ENCODE measurements at regions of chr1 and their contacts with region 1.

Region 1: DNA sequence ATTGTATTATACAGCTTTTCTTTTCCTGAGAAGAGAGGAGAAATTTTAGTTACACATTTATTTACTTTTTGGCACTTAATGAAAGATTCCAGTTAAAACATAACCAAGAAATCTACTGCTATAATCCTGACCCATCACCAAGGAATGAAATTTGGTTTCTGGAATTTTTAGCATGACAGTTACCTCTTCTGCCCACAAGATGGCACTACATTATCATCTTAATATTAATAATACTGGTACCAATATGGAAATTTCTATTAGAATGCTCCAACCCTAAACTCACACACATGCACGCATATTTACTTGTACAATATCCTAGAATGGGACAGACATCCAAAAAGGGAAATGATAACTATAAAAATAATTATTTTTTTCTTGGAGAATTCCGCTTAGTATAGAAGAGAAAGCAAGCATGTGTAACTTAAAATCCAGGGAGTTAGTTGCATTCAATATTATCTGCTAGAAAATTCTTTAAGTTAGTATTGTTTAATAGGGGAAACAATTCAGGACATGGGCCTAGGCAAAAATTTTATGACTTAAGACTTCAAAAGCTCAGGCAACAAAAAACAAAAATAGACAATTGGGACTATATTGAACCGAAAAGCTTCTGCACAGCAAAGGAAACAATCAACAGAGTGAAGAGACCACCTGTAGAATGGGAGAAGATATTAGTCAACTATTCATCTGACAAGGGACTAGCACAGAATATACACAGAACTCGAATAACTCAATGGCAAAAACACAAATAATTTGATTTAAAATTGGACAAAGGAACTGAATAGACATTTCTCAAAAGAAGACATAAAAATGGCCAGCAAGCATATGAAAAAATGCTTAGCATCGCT is 37.4 kb downstream of the MAP3K21 start:
- DNase-seq: peak; percentile 33
- H3K4me3 ChIP-seq: no peak overlapping the region
- H3K27ac ChIP-seq: no peak overlapping the region
- H3K4me1 ChIP-seq: no peaks in the 10 kb centered on the region
- H3K27me3 ChIP-seq: no peaks in the 10 kb centered on the region
- CTCF ChIP-seq: peak; percentile 77

Region 2: GRCh38 chr1:233738850-233739249 is 373.9 kb after region 1 on chr1:
- CTCF ChIA-PET with region 1: interaction called, 7 read pairs
- POLR2A ChIA-PET with region 1: interaction called, 21 read pairs
- intact Hi-C with region 1: no loop called
- DNase-seq: no peak
- H3K4me3 ChIP-seq: no peak overlapping the region
- H3K27ac ChIP-seq: no peak overlapping the region
- H3K4me1 ChIP-seq: no peaks in the 10 kb centered on the region
- H3K27me3 ChIP-seq: peaks cover 12% of the 10 kb centered on the region
- CTCF ChIP-seq: no peak

Region 3: DNA sequence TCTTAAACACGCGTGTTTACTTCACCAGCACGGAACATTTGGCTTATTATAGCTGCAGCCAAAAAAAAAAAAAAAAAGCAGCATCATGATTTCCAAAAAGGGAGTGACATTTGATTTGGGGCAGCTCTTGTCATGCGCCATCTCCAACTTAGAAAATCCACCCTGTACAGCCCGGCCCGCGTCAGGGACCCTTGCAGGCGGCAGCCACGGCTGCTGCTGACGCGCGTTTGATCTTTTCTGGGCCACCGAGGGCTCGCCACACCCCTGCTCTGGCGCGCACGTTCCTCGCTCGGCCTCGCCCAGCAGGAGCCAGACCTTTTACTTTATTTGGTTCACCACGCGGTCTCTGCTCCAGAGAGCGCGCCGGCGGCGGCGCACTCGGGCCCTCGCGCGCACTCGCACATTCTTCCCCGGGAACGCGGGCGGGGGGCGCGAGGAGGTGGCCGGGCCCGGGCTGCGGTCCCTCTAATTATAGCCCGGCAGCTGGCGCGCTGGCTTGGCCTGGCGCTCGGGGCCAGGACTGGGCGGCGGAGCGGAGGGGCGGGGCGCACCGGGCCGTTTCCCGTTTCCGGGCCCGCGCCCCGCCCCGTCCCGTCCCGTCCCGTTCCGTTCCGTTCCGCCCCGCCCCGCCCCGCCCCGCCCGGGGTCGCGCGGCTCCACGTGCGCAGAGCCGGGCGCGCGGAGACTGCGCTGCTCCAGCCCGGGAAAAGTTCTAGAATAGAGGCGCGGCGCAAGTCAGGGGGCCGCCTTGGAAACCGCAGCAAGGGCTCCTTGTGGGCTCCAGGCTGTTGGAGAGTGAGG is 1234.9 kb after region 1 on chr1:
- CTCF ChIA-PET with region 1: no interaction called
- POLR2A ChIA-PET with region 1: no interaction called
- intact Hi-C with region 1: no loop called
- DNase-seq: peak; percentile 76
- H3K4me3 ChIP-seq: peak overlapping the region; percentile 54
- H3K27ac ChIP-seq: peak overlapping the region; percentile 86
- H3K4me1 ChIP-seq: peaks cover 57% of the 10 kb centered on the region
- H3K27me3 ChIP-seq: no peaks in the 10 kb centered on the region
- CTCF ChIP-seq: no peak

Measured in A673 (cell line).